GM10248 (cell line): ENCODE measurements at regions of chr6 and their contacts with region 1.

Region 1: DNA sequence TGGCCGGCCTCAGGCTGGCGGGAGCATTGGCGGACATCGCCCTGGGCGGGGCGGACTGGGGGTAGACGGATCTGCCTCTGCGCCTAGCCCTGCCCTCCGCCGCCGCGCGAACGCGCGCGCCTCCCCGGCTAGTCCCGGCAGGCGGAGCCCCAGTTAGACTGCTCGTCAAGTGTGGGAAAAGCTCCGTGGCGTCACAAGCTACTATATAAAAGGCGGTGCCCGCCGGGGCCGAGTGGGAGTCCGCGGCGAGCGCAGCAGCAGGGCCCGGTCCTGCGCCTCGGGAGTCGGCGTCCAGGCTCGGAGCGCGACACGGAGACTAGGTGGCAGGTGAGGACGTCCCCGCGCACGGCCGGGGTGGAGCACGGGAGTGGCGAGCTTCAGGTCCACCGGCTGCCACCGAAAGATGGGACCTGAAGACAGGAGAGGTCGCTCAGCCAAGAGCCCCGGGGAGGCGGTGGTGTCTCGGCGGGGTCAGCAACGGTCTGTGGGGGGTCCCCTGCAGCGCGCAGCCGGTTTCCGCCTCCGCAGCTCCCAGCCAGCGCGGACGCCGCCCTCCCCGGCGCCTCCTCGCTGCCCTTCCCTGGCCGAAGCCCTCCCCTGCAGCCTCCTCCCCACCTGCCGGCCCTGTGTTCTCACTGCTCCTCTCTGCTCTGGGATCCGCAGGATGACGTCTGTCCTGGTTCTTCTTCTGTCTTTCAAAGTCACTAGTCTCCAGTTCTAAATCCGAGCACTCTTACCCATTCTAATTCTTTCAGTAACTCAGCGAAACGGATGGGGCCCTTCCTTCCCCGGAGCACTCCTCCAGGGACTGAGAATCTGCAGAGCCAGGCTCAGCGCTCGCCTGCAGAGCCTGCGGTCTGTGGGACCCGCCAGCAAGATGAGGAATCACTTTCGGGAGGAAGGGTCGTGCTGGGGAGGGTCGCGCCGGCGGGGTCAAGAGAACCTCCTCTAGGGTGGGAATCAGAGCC is 4.3 kb upstream of the RIPK1 start:
- DNase-seq: peak; percentile 92
- CTCF ChIP-seq: no peak

Region 2: DNA sequence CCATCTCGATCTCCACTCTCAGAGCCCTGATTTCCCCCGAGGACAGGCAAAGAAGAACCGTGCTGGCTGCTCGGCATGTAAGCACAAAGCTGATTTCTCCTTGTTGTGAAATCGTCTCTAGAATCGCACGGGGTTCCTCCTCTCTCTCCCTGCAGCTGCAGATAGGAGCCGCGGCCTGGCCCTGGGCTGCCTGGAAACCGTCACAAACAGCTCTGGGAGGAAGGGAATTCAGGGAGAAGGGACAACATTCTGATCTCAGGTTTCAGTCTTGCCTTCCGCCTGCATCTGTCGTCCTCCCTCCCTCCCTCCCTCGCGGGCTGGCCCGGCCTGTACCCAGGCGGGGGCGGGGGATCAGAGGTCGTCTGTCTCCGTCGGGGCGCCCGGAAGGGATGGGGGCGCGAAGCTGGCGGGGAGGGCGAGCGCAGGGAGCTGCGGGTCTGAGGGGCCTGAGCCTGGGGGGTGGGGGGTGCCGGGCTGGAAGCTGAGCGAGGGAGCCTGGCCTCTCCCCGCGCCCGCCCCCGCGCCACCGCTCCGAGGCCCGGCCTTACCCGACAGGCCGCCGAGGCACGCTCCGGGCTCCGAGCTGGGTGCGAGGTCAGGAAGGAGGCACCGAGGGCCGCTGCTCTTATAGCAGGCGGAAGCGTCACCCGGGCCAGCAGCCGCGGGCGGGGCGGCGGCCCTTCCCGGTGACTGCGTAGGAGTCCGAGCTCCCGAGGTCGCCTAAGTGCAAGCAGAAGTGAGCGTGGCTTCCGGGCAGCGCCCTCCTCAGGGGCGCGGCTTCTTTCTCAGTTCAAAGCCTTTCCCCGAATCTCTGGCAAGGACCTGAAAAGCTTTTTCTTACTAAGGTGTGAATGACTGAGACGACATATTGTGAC is 222.5 kb before region 1 on chr6 and contains the start of gene SERPINB1:
- CTCF ChIA-PET with region 1: interaction called, 5 read pairs
- POLR2A ChIA-PET with region 1: interaction called, 12 read pairs
- DNase-seq: peak; percentile 81
- CTCF ChIP-seq: peak; percentile 14

Region 3: DNA sequence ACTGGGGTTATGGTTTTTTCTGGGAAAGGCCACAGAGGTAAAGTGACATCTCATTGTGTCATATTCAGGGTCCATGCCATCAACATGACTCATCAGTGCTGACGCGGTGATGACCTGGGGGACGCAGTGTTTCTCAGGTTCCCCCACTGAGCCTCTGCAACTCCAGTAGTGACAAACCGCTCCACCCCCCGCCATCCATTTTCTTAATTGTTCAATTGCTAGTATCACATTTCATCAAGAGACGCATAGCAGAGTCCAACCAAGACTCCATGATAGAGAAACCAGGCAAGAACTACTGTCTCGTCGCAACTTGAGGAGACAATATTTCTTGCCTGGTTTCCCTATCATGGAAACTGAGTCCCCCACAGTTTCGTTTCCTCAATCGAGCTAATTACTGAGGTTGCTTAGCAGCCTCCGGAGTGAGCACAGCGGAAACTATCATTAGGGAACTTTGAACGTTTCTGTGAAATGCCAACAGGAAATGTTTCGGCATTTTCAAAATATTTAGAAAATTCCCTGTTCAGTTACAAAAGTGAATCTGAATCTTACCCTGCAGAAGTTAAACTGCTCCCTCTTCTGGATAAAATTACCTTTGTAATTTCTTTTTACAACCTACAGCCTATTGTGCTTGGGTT is 210.1 kb before region 1 on chr6:
- CTCF ChIA-PET with region 1: interaction called, 3 read pairs
- POLR2A ChIA-PET with region 1: interaction called, 12 read pairs
- DNase-seq: peak; percentile 53
- CTCF ChIP-seq: peak; percentile 20

Region 4: GRCh38 chr6:2870056-2870674 is 193.9 kb before region 1 on chr6:
- CTCF ChIA-PET with region 1: interaction called, 4 read pairs
- POLR2A ChIA-PET with region 1: interaction called, 10 read pairs
- DNase-seq: no peak
- CTCF ChIP-seq: no peak

Region 5: DNA sequence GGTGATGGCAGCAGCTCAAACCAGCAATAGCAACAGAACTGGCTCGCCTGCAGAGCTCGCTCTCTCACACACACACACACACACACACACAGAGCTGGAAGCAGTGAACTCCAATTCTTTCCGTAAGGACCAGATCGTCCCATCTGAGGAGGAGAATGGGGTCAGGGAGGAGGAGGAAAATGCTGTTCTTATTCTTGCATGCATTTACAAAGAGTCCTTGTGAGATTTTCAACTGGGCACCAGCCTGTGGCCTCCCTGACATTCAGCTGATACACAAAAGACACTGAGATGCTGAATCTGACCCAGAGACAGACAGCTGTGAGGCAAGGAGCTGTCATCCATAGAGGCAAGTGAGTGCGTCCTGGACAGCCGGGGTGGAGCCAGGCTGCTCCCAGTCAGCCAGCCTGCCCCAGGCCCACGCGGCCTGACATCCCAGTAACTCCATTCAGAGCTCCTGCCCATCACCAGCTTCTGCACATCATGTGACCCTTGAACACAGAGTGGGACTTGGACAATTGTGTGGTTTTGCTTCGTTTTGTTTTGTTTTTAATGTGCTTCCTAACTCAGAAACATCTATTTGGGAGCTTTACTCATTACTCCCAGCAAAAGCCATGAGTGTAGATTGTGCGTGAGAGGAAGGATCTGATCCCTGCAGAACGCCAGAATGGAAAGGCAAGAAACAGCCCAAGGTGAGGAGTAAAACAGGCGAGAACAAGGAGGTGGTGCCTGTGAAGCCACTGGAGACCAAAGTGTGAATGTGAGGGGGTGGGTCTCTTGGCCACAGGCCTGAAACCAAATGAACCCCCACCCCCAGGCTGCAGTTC is 163.0 kb before region 1 on chr6:
- CTCF ChIA-PET with region 1: interaction called, 6 read pairs
- POLR2A ChIA-PET with region 1: interaction called, 88 read pairs
- DNase-seq: no peak
- CTCF ChIP-seq: no peak

Region 6: GRCh38 chr6:2988426-2989331 is 75.3 kb before region 1 on chr6:
- CTCF ChIA-PET with region 1: interaction called, 6 read pairs
- POLR2A ChIA-PET with region 1: interaction called, 12 read pairs
- DNase-seq: peak; percentile 75
- CTCF ChIP-seq: peak; percentile 74